ENCODE measurements at regions of chr7 and their contacts with region 1.

Region 1: DNA sequence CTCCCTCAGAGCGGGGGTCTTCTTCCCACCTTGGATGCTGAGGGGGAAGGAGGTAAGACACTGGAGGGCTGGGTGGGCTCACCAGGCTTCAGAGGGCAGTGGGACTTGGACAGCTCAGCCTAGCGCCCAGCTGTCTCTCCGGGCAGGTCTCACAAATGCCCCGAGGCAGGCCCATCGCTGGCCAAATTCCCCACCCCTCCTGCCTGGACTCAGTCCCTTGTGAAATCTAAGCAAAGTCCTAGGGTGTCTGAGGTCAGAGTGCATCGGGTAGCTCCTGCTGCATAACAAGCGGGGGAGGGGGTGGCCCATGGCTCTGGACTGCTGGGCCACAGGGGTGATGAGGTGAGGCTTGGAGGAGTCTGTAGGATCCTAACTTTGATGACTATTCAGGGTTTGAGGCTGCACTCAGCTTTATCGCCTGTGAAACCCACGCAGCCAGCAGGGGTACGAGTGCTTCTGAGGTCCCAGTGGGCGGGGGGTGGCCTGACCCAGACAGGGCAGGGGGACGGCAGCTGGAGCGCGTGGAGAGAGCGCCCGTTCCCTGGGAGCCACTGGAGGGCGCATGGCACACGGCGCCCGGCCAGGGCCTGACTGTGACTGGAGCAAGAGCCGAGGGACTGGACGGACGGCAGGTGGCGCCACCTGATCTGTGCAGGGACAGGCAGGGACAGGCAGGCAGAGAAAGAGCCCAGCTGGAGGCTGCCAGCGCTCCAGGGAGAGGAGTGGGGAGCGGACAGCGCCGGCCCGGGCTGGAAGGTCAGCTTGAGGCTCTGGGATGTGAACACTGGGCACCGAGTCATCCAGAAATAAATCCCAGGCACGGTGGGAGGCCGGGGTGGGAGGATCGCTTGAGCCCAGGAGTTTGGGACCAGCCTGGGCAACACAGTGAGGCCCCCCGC is 10.0 kb downstream of the CYP2W1 start:
- DNase-seq: peak; percentile 70
- H3K4me3 ChIP-seq: no peak overlapping the region
- CTCF ChIP-seq: peak; percentile 100

Region 2: DNA sequence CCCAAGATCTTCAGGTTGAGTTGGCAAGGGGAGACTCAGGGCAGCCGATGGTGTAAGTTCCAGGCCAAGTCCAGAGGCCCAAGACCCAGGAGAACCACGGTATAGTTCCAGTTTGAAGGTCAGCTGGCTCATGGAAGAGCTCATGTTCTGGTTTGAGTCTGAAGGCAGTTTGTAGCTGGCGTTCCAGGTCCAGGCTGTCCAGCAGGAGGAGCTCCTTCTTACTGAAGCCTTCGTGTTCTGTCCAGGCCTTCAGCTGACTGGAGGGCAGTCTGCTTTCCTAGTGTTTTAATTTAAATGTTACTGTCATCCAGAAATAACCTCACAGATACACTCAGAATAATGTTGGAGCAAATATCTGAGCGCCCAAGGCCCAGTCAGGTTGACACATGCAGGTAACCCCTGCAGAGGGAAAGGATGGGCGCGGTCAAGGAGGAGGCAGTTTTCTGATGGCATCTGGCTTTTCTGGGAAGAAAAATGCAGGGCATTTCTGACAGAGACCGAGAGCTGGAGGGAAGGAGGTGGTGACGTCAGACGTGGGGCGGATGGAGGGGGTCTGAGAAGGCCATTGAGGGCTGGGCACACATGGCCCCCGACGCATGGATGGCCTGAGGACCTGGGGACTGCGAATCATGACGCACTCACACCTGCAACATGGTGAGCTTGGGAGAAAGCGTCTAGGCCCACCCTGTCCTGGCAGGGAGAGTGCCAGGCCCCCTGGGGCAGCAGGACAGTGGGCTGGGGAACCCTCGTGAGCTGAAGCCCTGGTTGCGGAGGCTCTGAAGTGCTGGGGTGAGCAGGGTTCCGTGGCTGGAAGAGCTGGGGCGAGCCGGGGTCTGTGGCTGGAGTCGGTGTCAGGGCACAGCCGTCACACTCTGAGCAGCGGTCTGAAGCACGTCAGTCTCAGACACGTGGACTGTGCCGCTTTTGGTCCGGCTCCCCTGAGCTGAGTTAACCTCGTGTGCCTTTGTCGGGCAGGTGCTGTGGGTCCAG is 156.3 kb before region 1 on chr7:
- CTCF ChIA-PET with region 1: no interaction called
- POLR2A ChIA-PET with region 1: no interaction called
- DNase-seq: no peak
- H3K4me3 ChIP-seq: no peak overlapping the region
- CTCF ChIP-seq: peak; percentile 61

Region 3: DNA sequence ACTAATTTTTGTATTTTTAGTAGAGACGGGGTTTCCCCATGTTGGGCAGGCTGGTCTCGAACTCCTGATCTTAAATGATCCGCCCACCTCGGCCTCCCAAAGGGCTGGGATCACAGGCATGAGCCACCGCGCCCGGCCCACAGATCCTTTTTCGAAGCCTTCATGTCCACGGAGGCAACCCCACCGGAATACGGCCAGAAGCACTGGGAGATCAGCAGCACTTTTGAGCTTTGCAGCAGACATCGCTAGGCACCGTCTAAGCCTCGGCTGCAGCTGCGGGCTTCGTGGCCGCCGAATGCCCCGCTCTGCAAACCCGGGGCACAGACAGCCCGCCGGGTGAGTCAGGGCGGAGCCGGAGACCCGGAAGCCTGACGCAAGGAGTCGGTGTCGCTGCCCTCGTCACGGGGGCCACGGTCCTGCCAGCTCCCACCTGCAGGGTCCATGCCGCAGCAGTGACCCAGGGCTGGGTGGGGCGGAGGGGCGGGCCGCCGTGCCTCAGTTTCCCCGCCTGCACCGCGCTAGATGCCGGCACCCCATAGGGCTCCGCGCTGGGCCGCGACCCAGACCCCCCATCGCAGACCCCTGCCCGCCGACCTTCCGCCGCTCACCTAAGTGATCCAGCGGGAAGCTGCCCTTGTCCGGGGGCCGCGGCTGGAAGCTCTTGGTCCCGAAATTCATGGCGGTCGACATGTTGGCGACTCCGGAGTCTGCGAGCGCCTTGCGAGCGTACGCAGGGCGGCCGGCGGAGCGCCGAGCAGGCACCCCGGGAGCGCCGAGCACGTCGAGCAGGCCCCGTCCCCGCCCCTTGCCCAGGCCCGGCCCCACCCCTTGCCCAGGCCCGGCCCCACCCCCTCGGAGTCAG is 17.9 kb before region 1 on chr7 and contains the start of gene COX19:
- CTCF ChIA-PET with region 1: interaction called, 103 read pairs
- POLR2A ChIA-PET with region 1: interaction called, 6 read pairs
- DNase-seq: peak; percentile 37
- H3K4me3 ChIP-seq: peak within 1 kb of the TSS; percentile 95
- CTCF ChIP-seq: no peak

Region 4: DNA sequence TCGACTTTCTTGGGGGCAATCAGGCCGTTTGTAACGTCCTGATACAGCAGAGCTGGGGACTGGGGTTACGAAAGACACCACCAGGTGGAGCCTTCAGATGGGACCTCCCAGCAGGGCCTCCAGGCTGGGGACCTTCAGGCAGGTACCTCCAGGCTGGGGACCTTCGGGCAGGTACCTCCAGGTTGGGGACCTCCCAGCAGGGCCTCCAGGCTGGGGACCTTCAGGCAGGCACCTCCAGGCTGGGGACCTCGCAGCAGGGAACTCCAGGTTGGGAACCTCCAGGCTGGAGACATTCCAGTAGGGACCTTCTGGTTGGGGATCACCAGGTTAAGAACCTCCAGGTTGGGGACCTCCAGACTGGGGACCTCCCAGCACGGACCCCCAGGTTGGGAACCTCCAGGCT is 27.9 kb after region 1 on chr7:
- CTCF ChIA-PET with region 1: interaction called, 20 read pairs
- POLR2A ChIA-PET with region 1: no interaction called
- DNase-seq: no peak
- H3K4me3 ChIP-seq: no peak overlapping the region
- CTCF ChIP-seq: no peak

Region 5: GRCh38 chr7:1059200-1060091 is 66.5 kb after region 1 on chr7:
- CTCF ChIA-PET with region 1: interaction called, 558 read pairs
- POLR2A ChIA-PET with region 1: no interaction called
- DNase-seq: no peak
- H3K4me3 ChIP-seq: no peak overlapping the region
- CTCF ChIP-seq: no peak

Region 6: DNA sequence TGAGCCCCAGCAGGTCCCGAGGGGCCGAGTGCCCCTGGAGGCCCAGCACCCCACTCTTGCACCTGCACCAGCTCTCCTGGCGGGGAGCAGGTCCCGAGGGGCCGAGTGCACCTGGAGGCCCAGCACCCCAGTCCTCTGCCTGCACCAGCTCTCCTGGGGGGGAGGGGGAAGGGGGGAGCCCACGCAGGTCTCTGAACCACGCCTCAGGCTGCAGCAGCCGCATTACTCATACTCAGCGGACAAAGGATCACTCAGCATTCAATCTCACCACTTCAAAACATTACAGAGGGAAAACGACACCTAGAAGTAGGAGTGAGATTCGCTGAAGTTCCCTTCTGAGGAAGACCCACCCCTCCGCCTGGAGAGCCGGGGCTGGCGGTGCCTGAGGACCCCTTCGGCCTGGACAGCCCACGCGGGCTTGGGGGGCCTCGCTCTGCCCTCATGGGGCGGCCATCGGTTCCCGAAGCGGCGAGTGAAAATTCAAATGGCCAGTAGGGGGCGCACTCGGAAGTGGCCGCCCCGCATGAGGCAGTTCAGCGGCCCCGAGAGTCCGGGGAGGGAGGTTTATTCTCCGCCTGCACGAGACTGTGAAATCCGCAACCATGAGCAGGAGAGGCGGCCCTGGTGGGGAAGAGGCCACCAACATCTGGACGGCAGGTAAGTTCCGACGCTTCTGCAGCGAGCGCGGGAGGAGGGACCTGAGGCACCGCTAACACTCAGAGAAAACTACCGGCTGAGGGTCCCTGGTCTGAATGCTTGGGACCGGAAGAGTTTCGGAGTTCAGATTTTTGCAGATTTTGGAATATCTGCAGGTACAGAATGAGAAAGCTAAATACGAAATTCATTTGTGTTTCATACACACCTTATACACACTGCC is 93.9 kb after region 1 on chr7:
- CTCF ChIA-PET with region 1: interaction called, 26 read pairs
- POLR2A ChIA-PET with region 1: no interaction called
- DNase-seq: no peak
- H3K4me3 ChIP-seq: peak overlapping the region; percentile 56
- CTCF ChIP-seq: peak; percentile 83

Region 7: GRCh38 chr7:1137510-1138167 is 144.7 kb after region 1 on chr7:
- CTCF ChIA-PET with region 1: interaction called, 23 read pairs
- POLR2A ChIA-PET with region 1: no interaction called
- DNase-seq: no peak
- H3K4me3 ChIP-seq: peak overlapping the region; percentile 85
- CTCF ChIP-seq: no peak

Region 8: GRCh38 chr7:1169409-1170368 is 176.7 kb after region 1 on chr7:
- CTCF ChIA-PET with region 1: interaction called, 90 read pairs
- POLR2A ChIA-PET with region 1: no interaction called
- DNase-seq: no peak
- H3K4me3 ChIP-seq: peak overlapping the region; percentile 54
- CTCF ChIP-seq: peak; percentile 92